Activated T-helper 1 cell treated with anti-CD3 and anti-CD28 coated beads, Interleukin-12 subunit alpha, Interleukin-12 subunit beta, Interleukin-2, Interleukin-4 antibody, amounts not matched to agents 30 ng/mL and 10 ng/mL and 1 ng/mL, durations not matched to agents 14 hours and 24 hours and 36 hours (primary cell): ENCODE measurements at regions of chr3 and their contacts with region 1.

Region 1: DNA sequence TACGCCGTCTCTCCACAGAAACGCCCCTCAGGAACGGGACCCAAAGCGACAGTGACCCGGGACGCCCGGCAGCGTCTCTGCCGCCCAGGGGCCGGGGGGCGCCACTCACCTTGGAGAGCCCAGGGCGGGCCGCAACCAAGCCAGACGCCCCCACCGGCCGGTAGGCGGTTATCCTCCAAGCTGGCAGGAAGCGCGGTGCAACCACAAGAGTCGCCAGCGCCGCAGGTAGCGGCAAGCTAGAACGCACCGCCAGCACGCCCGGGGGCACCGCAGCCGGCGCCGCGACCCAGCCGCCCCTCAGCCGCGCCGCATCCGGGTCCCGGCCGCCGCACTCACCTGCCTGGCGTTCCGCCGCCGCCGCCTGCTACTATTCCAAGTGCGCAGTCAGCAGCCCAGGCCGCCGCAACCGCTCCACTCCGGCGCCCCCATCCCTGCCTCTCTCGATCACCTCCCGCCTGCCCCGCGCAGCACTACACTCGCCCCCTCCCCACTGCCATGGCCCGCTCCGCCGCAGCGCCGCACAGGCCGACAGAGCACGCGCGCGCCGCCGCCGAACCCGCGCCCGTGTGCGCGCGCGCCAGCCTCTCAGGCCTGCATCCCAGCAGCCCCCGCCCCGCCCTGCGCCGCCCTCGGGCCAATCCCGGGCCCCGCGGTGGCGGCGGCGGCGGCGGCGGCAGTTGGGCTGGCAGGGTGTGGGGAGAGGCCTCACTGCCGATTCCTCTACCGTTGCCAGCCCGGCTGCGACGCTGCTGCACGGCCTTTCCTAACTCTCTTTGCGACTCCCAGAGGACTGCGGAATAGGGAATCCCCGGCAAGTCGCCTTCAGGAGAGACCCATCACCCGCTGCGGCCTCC is at the start of gene PIK3CB:
- DNase-seq: peak; percentile 79
- H3K4me3 Mint-ChIP-seq: peak within 1 kb of the TSS; percentile 94
- H3K27ac Mint-ChIP-seq: peak within 1 kb of the TSS; percentile 94
- H3K4me1 Mint-ChIP-seq: peaks cover 22% of the 10 kb centered on the region
- H3K27me3 Mint-ChIP-seq: no peaks in the 10 kb centered on the region
- total RNA-seq, gene PIK3CB: 19.3 and 22.0 TPM in 2 replicates

Region 2: GRCh38 chr3:138174421-138175122 is 660.0 kb before region 1 on chr3 and contains the start of gene DBR1:
- intact Hi-C with region 1: loop called (anchors 5 kb)
- DNase-seq: peak; percentile 68
- H3K4me3 Mint-ChIP-seq: peak within 1 kb of the TSS; percentile 98
- H3K27ac Mint-ChIP-seq: peak within 1 kb of the TSS; percentile 94
- H3K4me1 Mint-ChIP-seq: peaks cover 42% of the 10 kb centered on the region
- H3K27me3 Mint-ChIP-seq: peaks cover 7% of the 10 kb centered on the region
- total RNA-seq, gene DBR1: 25.7 and 31.0 TPM in 2 replicates

Region 3: DNA sequence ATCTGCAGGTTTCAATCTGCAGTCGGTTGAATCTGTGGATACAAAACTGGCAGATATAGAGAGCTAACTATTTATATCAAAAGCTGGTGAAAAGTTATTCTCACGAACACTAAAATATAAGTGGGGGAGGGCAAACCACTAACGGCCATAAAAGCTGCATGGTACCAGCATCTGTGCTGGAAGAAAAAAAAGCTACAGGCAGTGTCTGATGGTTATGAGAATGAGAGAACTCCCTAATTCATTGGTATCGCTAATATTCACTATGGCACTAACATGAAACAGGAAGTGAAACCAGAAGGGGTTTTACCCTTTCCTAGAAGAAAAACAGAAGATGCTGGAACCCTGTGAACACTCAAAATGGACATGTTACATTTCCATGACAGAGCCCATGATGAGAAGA is 256.4 kb before region 1 on chr3:
- intact Hi-C with region 1: no loop called
- DNase-seq: no peak
- H3K4me3 Mint-ChIP-seq: peak overlapping the region; percentile 9
- H3K27ac Mint-ChIP-seq: no peak overlapping the region
- H3K4me1 Mint-ChIP-seq: peaks cover 19% of the 10 kb centered on the region
- H3K27me3 Mint-ChIP-seq: no peaks in the 10 kb centered on the region

Region 4: GRCh38 chr3:138608322-138609135 is 226.1 kb before region 1 on chr3 and contains the start of gene FAIM:
- intact Hi-C with region 1: loop called (anchors 2 kb)
- DNase-seq: peak; percentile 46
- H3K4me3 Mint-ChIP-seq: peak within 1 kb of the TSS; percentile 89
- H3K27ac Mint-ChIP-seq: peak within 1 kb of the TSS; percentile 92
- H3K4me1 Mint-ChIP-seq: peaks cover 11% of the 10 kb centered on the region
- H3K27me3 Mint-ChIP-seq: peaks cover 6% of the 10 kb centered on the region
- total RNA-seq, gene FAIM: 1.4 and 2.3 TPM in 2 replicates

Region 5: DNA sequence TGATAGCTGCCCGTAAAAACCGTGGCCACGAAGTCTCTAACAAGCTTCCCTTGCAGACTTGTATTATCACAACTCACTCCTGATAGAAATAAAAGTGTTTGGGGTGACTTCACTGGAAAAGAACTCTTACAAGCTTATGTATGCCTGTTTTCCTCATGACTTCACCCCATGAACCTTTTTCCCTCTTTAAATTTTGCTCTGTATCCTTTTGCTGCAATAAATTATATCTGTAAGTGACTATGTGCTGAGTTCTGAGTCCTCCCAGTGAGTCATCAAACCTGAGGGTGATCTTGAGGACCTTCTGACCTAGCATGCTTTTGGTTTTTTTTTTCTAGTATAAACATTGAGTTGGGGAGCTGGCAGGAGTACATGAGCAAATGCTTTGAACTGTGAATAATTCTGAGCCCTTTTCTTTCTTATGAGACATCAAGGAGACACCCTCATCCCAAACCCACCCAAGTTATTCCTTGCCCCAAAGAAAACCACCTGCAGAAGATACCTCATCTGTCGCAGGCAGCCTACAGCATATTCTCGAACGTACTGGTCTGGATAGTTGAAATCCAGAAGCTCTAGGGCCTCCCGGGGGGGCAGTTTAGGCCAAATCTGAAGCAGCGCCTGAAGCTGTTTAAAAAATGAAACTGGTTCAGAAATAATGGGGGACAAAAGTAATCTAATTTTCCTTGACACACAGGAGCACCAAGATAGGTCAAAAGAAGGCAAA is 140.1 kb before region 1 on chr3:
- intact Hi-C with region 1: loop called (anchors 1 kb)
- DNase-seq: no peak
- H3K4me3 Mint-ChIP-seq: no peak overlapping the region
- H3K27ac Mint-ChIP-seq: no peak overlapping the region
- H3K4me1 Mint-ChIP-seq: no peaks in the 10 kb centered on the region
- H3K27me3 Mint-ChIP-seq: no peaks in the 10 kb centered on the region

Region 6: DNA sequence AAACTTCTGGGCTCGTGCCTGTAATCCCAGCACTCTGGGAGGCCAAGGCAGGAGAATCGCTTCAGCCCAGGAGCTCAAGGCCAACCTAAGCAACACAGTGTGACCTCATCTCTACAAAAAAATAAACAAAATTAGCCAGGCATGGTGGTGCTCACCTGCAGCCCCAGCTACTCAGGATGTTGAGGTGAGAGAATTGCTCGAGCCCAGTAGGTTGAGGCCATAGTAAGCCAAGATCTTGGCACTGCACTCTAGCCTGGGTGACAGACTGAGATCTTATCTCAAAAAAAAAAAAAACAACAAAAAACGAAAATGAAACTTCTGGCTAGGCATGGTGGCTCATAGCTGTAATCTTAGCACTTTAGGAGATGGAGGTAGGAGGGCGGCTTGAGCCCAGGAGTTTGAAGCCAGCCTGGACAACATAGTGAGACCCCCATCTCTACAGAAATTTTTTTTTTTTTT is 53.5 kb before region 1 on chr3:
- intact Hi-C with region 1: loop called (anchors 1 kb)
- DNase-seq: peak; percentile 50
- H3K4me3 Mint-ChIP-seq: peak overlapping the region; percentile 5
- H3K27ac Mint-ChIP-seq: peak overlapping the region; percentile 68
- H3K4me1 Mint-ChIP-seq: peaks cover 26% of the 10 kb centered on the region
- H3K27me3 Mint-ChIP-seq: no peaks in the 10 kb centered on the region

Region 7: DNA sequence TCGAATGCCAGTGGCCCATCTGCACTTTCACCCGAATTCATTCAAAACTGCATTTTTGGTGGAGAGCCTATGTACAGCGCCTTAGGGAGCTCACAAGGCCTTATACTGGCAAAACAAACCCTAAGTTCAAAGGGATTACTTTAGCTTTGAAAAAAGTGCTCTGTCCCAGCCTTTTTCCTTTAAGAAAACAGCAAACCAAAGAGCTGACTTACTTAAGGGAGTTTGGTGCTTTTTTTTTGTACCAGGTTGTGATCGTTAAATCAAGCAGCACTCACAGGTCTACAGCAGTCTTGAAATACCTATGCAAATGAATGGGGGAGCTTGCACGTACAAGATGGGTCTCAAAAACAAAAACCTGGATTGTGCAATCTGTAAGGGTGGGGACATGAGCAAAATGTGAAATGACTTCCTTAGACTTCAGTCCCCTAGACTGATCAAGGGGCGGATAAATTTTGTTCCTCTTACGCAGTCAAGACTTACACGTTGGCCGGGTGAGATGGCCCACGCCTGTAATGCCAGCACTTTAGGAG is 11.7 kb after region 1 on chr3:
- intact Hi-C with region 1: no loop called
- DNase-seq: no peak
- H3K4me3 Mint-ChIP-seq: no peak overlapping the region
- H3K27ac Mint-ChIP-seq: no peak overlapping the region
- H3K4me1 Mint-ChIP-seq: no peaks in the 10 kb centered on the region
- H3K27me3 Mint-ChIP-seq: peaks cover 2% of the 10 kb centered on the region

Region 8: GRCh38 chr3:139343895-139344856 is 509.6 kb after region 1 on chr3 and contains the start of gene MRPS22:
- intact Hi-C with region 1: loop called (anchors 10 kb)
- DNase-seq: peak; percentile 79
- H3K4me3 Mint-ChIP-seq: no peak within 1 kb of the TSS
- H3K27ac Mint-ChIP-seq: peak within 1 kb of the TSS; percentile 87
- H3K4me1 Mint-ChIP-seq: peaks cover 14% of the 10 kb centered on the region
- H3K27me3 Mint-ChIP-seq: peaks cover 3% of the 10 kb centered on the region
- total RNA-seq, gene MRPS22: 48.4 and 54.7 TPM in 2 replicates